ENCODE measurements at regions of chr5 and their contacts with region 1.

Region 1: DNA sequence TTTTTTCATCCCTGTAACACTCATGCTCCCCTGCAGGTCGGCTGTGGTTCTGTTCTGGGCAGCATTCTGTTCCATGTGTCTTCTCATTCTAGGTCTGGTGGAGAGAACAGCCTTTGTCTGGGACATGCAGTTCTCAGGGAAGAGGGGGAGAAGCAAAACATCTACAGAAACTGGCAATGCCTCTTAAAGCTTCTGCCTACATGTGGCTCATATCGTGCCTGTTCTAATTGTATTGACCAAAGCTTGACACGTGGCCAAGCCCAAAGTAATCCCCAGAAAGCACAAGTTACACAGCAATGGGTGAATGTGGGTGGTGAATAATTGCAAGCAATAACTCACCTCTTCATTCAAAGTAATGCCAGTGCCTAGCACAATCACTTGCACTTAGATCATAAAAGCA is 218.2 kb upstream of the IL12B start:
- DNase-seq: no peak
- ATAC-seq: no peak
- H3K4me3 ChIP-seq: no peak overlapping the region
- H3K27ac ChIP-seq: no peak overlapping the region
- H3K4me1 ChIP-seq: no peaks in the 10 kb centered on the region
- H3K27me3 ChIP-seq: no peaks in the 10 kb centered on the region
- CTCF ChIP-seq: no peak
- EP300 ChIP-seq: no peak
- POLR2A ChIP-seq: no peak
- RAD21 ChIP-seq: no peak

Region 2: GRCh38 chr5:159240301-159240870 is 308.1 kb before region 1 on chr5:
- CTCF ChIA-PET with region 1: no interaction called
- POLR2A ChIA-PET with region 1: no interaction called
- RAD21 ChIA-PET with region 1: no interaction called
- SMC1A ChIA-PET with region 1: no interaction called
- in situ Hi-C with region 1: no loop called
- intact Hi-C with region 1: no loop called
- DNase-seq: no peak
- ATAC-seq: no peak
- H3K4me3 ChIP-seq: no peak overlapping the region
- H3K27ac ChIP-seq: no peak overlapping the region
- H3K4me1 ChIP-seq: no peaks in the 10 kb centered on the region
- H3K27me3 ChIP-seq: no peaks in the 10 kb centered on the region
- CTCF ChIP-seq: no peak
- EP300 ChIP-seq: no peak
- POLR2A ChIP-seq: no peak
- RAD21 ChIP-seq: no peak

Region 3: DNA sequence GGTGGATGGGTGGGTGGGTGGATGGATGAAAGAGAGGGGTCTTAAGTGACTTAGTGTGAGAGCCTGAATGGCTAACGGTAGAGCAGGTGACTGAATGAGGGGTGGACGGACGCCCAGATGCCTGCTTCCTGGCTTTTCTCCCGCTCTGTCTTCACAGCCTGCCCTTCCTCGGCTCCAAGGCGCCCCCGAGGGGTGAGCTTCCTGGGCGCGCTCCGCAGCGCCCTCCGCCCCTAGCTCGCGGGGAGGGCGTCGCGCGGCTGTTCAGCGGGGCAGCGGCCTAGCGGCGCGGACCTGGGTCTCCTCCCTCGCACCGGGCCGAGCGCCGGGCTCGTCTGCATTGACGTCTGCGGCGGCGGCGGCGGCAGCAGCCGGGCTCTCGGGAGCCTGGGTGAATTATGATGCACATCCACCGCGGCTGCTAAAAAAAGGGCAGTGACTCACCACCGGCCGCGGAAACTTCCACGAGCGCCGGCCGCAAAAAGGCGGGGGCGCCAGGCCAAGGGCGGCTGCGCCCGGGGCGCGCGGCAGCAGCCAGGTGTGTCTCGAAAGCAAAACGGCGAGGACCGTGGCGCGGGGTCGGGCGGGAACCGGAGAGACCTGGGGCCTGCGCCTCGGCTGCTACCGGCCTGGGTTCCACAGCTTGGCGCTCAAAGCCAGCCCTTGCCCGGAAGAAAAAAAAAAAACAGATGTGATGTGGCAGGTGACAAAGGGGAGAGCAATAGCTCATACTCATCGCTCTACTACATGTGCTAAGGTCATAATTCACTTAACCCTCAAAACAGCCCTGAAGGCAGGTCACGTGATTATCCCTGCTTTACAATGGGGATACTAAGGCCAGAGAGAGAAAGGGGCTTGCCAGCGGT is 224.8 kb after region 1 on chr5:
- CTCF ChIA-PET with region 1: no interaction called
- POLR2A ChIA-PET with region 1: no interaction called
- RAD21 ChIA-PET with region 1: no interaction called
- SMC1A ChIA-PET with region 1: no interaction called
- in situ Hi-C with region 1: no loop called
- intact Hi-C with region 1: loop called (anchors 10 kb)
- DNase-seq: no peak
- ATAC-seq: peak; percentile 97
- H3K4me3 ChIP-seq: peak overlapping the region; percentile 24; the same call in 1 of the 2 replicates
- H3K27ac ChIP-seq: no peak overlapping the region
- H3K4me1 ChIP-seq: peaks cover 4% of the 10 kb centered on the region
- H3K27me3 ChIP-seq: no peaks in the 10 kb centered on the region; a peak in 1 of 4 replicates
- CTCF ChIP-seq: no peak; a peak in 1 of 6 replicates
- EP300 ChIP-seq: 0 out of 4 replicates have a peak, but pooled peaks of 1 of the 2 experiments have one; percentile 10
- POLR2A ChIP-seq: no peak
- RAD21 ChIP-seq: 0 out of 2 replicates have a peak, but pooled peaks have one; percentile 16